ENCODE measurements at regions of chr2 and their contacts with region 1.

Region 1: GRCh38 chr2:225668606-225669266 is 269.2 kb downstream of the NYAP2 start:
- DNase-seq: peak; percentile 38 to 50 (median 43)
- H3K4me3 ChIP-seq: no peak overlapping the region
- H3K4me3 Mint-ChIP-seq: no peak overlapping the region
- H3K27ac ChIP-seq: no peak overlapping the region
- H3K27ac Mint-ChIP-seq: no peak overlapping the region
- H3K4me1 ChIP-seq: no peaks in the 10 kb centered on the region
- H3K4me1 Mint-ChIP-seq: no peaks in the 10 kb centered on the region
- H3K27me3 ChIP-seq: no peaks in the 10 kb centered on the region
- H3K27me3 Mint-ChIP-seq: peaks cover 0 to 7% of the 10 kb centered on the region in 2 donors

Region 2: DNA sequence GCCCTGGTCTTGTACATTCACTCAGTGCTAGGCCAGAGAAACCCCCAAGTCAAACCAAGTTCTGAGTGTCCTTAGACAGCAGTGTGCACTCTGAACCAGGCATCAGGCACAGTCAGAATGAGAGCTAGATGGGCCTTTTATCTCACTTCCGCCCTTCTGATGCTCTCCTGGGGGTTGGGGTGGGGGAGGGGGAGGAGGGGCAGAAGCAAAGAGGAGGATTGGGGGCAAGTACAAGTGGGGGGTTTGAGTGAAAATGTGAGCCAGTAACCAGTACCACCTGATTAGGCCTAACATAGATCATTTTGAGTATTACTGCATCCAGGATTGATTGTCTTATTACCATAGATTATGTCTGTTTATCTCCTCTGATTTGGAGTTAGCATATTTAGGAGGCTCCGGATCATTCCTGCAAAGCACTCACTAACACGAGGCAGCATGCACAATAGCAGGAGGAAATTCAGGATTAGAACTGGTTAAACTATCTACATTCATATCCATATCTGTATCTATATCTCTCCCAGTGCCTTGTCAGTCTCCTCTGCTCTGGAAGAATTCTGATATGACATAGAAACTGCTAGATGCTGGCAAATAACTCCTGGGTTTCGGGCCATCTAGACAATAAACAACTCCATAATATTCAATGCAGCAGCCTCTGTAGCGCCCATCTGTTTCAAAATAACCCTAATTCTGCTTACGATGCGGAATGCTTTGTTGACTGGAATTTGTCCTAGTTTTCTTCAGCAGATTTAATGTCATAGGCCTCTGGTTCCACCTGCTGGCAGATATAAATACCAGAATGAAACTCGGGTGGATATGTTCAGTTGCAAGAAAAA is 1316.2 kb after region 1 on chr2:
- CTCF ChIA-PET with region 1: interaction called, 5 read pairs
- POLR2A ChIA-PET with region 1: no interaction called
- intact Hi-C with region 1: loop called (anchors 2 kb)
- DNase-seq: peak in 4 of 5 donors; percentile 3 to 23 (median 14)
- H3K4me3 ChIP-seq: no peak overlapping the region
- H3K4me3 Mint-ChIP-seq: no peak overlapping the region
- H3K27ac ChIP-seq: no peak overlapping the region
- H3K27ac Mint-ChIP-seq: peak overlapping the region in 2 of 7 donors; percentile 48 to 64
- H3K4me1 ChIP-seq: peaks cover 7% of the 10 kb centered on the region
- H3K4me1 Mint-ChIP-seq: peaks cover 14 to 23% (median 18%) of the 10 kb centered on the region in 4 donors
- H3K27me3 ChIP-seq: no peaks in the 10 kb centered on the region
- H3K27me3 Mint-ChIP-seq: no peaks in the 10 kb centered on the region

Region 3: DNA sequence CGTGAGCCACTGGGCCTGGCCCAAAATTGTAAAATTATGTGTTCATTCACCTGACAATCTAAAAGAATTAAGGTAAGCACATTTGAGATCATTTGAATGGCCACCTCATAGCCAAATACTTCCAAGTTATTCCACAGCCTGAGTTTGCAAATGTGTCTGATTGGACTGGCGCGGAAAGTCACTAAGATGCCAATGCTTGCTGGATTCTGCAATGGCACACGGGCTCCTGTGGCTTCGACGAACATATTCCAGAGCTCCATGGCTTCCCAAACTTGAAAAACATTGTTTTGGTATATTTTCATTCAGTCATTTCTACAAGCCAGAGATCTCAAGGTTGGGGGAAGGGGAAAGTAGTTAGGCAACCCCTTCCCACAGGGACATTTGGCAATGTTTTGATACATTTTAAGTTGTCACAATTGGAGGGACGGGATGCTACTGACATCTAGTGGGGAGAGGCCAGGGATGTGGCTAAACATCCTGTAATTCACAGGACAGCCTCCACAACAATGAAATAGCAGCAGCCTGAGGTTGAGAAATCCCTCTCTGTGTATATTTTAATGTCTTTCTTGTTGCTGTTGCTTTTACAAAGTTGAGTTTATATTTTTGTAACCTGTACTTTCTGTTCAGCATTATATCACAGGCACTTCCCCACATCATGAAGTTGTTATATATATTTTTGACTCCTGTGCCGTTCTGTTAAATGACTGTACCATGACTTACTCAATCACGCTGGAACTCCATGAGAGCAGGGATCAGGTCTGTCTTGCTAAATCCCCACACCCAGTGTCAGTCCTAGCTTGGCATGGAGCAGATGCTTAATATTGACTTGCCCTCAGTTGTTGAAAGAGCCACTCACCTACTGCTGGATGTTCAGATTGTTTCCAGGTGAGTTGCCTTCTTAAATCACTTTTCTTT is 1438.4 kb after region 1 on chr2:
- CTCF ChIA-PET with region 1: no interaction called
- POLR2A ChIA-PET with region 1: no interaction called
- intact Hi-C with region 1: loop called (anchors 1 kb)
- DNase-seq: peak in 4 of 5 donors; percentile 10 to 24 (median 18)
- H3K4me3 ChIP-seq: no peak overlapping the region
- H3K4me3 Mint-ChIP-seq: no peak overlapping the region
- H3K27ac ChIP-seq: no peak overlapping the region
- H3K27ac Mint-ChIP-seq: no peak overlapping the region
- H3K4me1 ChIP-seq: no peaks in the 10 kb centered on the region
- H3K4me1 Mint-ChIP-seq: no peaks in the 10 kb centered on the region
- H3K27me3 ChIP-seq: no peaks in the 10 kb centered on the region
- H3K27me3 Mint-ChIP-seq: peaks cover 3 to 7% of the 10 kb centered on the region in 2 donors

Region 4: DNA sequence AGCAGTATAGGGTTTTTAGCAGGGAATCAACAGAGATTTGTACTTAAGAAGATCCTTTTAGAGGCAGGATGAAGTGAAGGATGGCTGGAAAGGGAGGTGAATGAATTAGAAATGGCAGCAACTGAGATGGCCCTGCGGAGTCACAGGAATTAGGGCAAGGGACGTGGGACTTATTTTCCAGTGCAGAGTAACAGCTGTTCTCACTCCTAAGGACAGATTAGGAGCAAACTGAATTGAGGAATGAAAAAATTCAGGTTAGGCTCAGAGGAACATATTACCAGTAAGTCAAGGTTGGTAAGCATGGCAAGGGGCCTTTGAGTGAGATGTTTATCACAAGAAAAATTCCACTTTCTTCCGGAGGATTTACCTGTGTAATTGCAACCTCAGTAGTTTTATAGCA is 1530.1 kb after region 1 on chr2:
- CTCF ChIA-PET with region 1: no interaction called
- POLR2A ChIA-PET with region 1: no interaction called
- intact Hi-C with region 1: no loop called
- DNase-seq: no peak
- H3K4me3 ChIP-seq: no peak overlapping the region
- H3K4me3 Mint-ChIP-seq: no peak overlapping the region
- H3K27ac ChIP-seq: no peak overlapping the region
- H3K27ac Mint-ChIP-seq: no peak overlapping the region
- H3K4me1 ChIP-seq: no peaks in the 10 kb centered on the region
- H3K4me1 Mint-ChIP-seq: no peaks in the 10 kb centered on the region
- H3K27me3 ChIP-seq: no peaks in the 10 kb centered on the region
- H3K27me3 Mint-ChIP-seq: no peaks in the 10 kb centered on the region